IMR-90 (cell line): ENCODE measurements at regions of chr1 and their contacts with region 1.

Region 1: DNA sequence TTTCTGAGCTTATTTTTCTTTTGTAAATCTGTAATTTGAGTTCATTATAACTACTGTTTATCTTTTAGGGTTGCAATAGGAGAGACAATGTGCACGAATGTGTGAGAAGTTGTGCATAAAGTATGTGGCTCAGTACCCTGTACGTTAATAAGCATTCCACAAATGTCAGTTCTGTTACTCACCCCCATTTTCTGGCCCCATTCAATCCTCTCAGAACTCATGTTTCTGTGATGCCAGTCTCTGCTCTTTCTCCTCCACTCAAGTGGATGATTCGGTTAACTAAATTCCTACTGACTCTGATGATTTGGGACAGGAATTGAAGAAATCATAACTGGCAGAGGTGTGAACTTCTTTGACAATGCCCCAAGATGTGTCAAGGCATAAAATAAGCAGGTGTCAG is 10.2 kb upstream of the DMRTB1 start:
- DNase-seq: peak; percentile 88
- ATAC-seq: peak; percentile 91
- H3K4me3 ChIP-seq: no peak overlapping the region
- H3K27ac ChIP-seq: peak overlapping the region; percentile 55
- H3K4me1 ChIP-seq: peaks cover 7% of the 10 kb centered on the region
- H3K27me3 ChIP-seq: no peaks in the 10 kb centered on the region; the same call in 1 of the 2 replicates
- CTCF ChIP-seq: no peak
- POLR2A ChIP-seq: no peak
- RAD21 ChIP-seq: no peak

Region 2: DNA sequence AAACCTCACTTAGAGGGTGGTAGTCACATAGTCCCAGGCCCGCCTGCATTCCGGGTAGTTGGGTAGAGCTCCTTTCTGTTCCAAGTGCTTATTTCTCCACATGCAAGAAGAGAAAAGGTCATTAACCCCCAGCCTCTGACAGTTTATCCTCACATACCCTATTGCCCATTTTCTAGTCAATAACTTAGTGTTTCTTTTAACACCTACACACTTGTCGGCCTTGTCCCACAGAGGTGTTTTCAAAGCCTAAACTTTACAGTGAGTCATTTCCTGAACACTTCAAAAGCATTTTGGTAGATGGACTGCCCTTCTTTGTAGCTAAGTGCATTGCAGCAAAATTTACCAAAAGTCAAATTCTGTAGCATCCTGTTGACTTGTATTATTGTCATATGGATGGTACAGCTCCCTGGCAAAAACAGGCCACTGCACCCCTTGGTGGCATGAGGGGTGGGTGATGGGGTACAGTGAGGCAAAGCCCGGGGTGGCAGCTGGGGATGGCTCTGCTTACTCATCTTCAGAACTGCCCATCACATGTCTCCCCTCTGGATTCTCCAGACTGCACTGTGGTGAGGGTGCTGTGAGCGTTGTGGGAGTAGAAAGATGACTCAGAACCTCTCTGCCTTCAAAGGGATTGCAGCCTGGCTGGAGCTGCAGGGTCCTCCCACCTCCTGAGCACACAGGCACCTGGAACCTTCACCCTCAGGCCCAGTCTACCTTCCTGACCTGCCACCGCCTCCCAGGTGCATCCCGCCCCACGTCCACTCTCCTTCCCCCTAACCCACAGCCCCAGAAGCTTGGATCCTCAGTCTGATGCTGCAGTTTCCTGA is 35.6 kb before region 1 on chr1:
- CTCF ChIA-PET with region 1: interaction called, 6 read pairs
- POLR2A ChIA-PET with region 1: no interaction called
- dilution Hi-C with region 1: no loop called
- in situ Hi-C with region 1: no loop called
- intact Hi-C with region 1: loop called (anchors 1 kb)
- DNase-seq: peak; percentile 89
- ATAC-seq: peak; percentile 80
- H3K4me3 ChIP-seq: no peak overlapping the region
- H3K27ac ChIP-seq: peak overlapping the region; percentile 8; the same call in 1 of the 2 replicates
- H3K4me1 ChIP-seq: peaks cover 24% of the 10 kb centered on the region
- H3K27me3 ChIP-seq: peaks cover 35% of the 10 kb centered on the region
- CTCF ChIP-seq: no peak
- POLR2A ChIP-seq: no peak
- RAD21 ChIP-seq: no peak